ENCODE measurements at regions of chr6 and their contacts with region 1.

Region 1: GRCh38 chr6:21769405-21769861 is 175.9 kb downstream of the SOX4 start:
- DNase-seq: peak; percentile 94
- H3K4me3 ChIP-seq: no peak overlapping the region
- H3K27ac ChIP-seq: peak overlapping the region; percentile 98
- H3K4me1 ChIP-seq: peaks cover 53% of the 10 kb centered on the region
- H3K27me3 ChIP-seq: no peaks in the 10 kb centered on the region
- CTCF ChIP-seq: no peak
- POLR2A ChIP-seq: no peak

Region 2: GRCh38 chr6:20877008-20877937 is 892.2 kb before region 1 on chr6:
- CTCF ChIA-PET with region 1: no interaction called
- POLR2A ChIA-PET with region 1: no interaction called
- dilution Hi-C with region 1: no loop called
- intact Hi-C with region 1: loop called (anchors 2 kb)
- DNase-seq: peak; percentile 94
- H3K4me3 ChIP-seq: no peak overlapping the region
- H3K27ac ChIP-seq: peak overlapping the region; percentile 85
- H3K4me1 ChIP-seq: peaks cover 38% of the 10 kb centered on the region
- H3K27me3 ChIP-seq: no peaks in the 10 kb centered on the region
- CTCF ChIP-seq: no peak
- POLR2A ChIP-seq: peak; percentile 8

Region 3: GRCh38 chr6:21664314-21665109 is 104.9 kb before region 1 on chr6:
- CTCF ChIA-PET with region 1: no interaction called
- POLR2A ChIA-PET with region 1: no interaction called
- dilution Hi-C with region 1: no loop called
- intact Hi-C with region 1: loop called (anchors 2 kb)
- DNase-seq: peak; percentile 61
- H3K4me3 ChIP-seq: peak overlapping the region; percentile 47 to 59 (median 55)
- H3K27ac ChIP-seq: peak overlapping the region; percentile 22
- H3K4me1 ChIP-seq: peaks cover 24% of the 10 kb centered on the region
- H3K27me3 ChIP-seq: no peaks in the 10 kb centered on the region
- CTCF ChIP-seq: no peak
- POLR2A ChIP-seq: no peak

Region 4: GRCh38 chr6:21840428-21840827 is 71.0 kb after region 1 on chr6:
- CTCF ChIA-PET with region 1: interaction called, 4 read pairs
- POLR2A ChIA-PET with region 1: no interaction called
- dilution Hi-C with region 1: no loop called
- intact Hi-C with region 1: loop called (anchors 1 kb)
- DNase-seq: peak; percentile 96
- H3K4me3 ChIP-seq: peak overlapping the region in 1 of 3 experiments; percentile 13
- H3K27ac ChIP-seq: peak overlapping the region; percentile 96
- H3K4me1 ChIP-seq: peaks cover 45% of the 10 kb centered on the region
- H3K27me3 ChIP-seq: no peaks in the 10 kb centered on the region
- CTCF ChIP-seq: no peak
- POLR2A ChIP-seq: peak; percentile 49

Region 5: DNA sequence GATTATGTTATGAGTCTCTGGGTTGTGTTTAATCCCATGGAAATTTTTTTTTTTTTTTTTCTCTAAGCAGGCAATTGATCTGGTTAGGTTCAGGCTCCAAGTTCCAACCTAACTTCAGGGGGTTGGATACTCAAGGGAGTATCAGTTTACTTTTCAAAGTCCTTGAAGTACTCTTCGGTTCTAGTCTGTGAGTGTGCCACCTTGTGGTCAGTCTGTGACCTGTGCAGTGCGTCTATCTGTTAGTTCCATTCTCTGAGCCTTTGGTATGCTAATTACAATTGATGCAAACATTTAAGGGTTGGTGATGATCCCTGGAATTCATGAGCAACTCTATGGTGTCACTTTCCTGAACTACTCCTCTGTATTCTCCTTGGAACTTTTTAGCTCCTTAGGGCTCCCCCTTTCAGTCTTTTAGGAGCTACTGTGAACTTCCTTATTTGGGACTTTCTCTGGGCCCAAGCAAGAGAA is 166.2 kb after region 1 on chr6:
- CTCF ChIA-PET with region 1: interaction called, 5 read pairs
- POLR2A ChIA-PET with region 1: no interaction called
- dilution Hi-C with region 1: no loop called
- intact Hi-C with region 1: loop called (anchors 2 kb)
- DNase-seq: no peak
- H3K4me3 ChIP-seq: no peak overlapping the region
- H3K27ac ChIP-seq: no peak overlapping the region
- H3K4me1 ChIP-seq: peaks cover 19% of the 10 kb centered on the region
- H3K27me3 ChIP-seq: no peaks in the 10 kb centered on the region
- CTCF ChIP-seq: peak; percentile 42 to 45
- POLR2A ChIP-seq: no peak

Region 6: DNA sequence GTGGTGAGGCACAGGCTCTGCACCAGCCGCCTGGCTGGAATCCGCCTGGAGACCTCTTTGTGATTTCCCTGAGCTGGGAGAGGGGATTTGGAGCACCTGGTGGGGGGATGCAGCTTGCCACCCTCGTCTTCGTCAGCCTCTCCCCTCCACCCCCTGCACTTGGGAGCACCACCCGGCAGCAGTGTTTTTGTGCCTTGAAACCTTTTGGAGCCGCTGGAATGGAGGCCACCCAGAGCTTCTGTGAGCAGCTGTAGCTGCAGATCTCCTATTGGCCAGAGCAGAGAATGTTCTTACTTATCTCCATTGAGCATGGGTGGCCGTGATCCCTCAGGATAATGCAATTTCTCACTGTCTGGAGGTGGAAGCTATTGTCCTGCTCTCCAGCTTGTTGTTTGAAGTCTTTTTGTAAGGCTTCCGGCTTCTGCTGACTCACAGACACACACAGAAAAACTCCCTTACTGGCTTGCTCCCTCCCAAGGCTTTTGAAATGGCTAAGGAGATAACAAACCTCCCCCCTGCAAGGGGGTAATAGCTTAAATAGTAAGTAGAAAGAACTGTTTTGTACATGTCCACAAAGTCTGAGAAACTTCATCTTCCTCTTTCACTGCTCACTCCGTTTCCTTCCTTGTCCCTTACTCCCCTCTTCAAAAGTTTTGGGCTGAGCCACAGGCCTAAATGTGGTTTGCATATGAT is 256.2 kb after region 1 on chr6:
- CTCF ChIA-PET with region 1: no interaction called
- POLR2A ChIA-PET with region 1: no interaction called
- dilution Hi-C with region 1: no loop called
- intact Hi-C with region 1: loop called (anchors 5 kb)
- DNase-seq: peak; percentile 95
- H3K4me3 ChIP-seq: no peak overlapping the region
- H3K27ac ChIP-seq: peak overlapping the region; percentile 86
- H3K4me1 ChIP-seq: peaks cover 16% of the 10 kb centered on the region
- H3K27me3 ChIP-seq: no peaks in the 10 kb centered on the region
- CTCF ChIP-seq: no peak
- POLR2A ChIP-seq: no peak